ENCODE measurements at regions of chr9 and their contacts with region 1.

Region 1: DNA sequence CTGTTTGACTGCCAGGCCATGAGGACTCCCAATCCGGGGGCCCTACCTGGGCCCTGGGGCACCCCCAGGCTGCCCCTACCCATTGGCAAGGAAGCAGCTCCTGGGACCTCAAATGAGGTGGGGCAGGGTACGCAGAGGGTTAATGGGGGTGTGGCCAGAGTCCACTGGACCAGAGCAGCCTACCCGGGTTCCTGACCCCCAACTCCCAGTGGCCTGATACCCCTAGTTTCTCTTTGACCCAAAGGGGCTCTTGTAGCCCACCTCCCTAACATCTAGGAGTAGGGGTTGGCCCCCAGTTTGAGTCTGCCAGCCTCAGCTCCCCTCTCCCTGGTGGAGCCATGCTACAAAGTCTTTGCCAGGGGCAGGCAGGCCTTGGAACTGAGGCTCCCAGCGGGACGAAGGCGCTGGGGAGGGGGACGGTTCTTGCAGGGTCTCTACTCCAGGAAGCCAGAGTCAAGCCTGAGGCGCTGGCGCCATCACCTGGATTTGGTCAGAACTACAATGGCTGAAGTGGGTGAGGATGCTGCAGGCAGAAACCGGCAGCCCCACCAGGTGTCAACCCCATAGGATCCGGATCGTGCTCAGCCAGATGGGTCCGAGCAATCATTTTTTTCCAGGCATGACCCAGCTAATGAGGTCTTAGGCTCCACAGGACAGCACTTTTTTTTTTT is 8.4 kb upstream of the CERCAM start:
- DNase-seq: peak; percentile 40 to 57
- H3K4me3 ChIP-seq: no peak overlapping the region
- H3K27ac ChIP-seq: no peak overlapping the region
- H3K4me1 ChIP-seq: peaks cover 13% of the 10 kb centered on the region in 2 donors
- H3K27me3 ChIP-seq: no peaks in the 10 kb centered on the region
- CTCF ChIP-seq: peak; percentile 38 to 63 (median 46)
- POLR2A ChIP-seq: no peak

Region 2: DNA sequence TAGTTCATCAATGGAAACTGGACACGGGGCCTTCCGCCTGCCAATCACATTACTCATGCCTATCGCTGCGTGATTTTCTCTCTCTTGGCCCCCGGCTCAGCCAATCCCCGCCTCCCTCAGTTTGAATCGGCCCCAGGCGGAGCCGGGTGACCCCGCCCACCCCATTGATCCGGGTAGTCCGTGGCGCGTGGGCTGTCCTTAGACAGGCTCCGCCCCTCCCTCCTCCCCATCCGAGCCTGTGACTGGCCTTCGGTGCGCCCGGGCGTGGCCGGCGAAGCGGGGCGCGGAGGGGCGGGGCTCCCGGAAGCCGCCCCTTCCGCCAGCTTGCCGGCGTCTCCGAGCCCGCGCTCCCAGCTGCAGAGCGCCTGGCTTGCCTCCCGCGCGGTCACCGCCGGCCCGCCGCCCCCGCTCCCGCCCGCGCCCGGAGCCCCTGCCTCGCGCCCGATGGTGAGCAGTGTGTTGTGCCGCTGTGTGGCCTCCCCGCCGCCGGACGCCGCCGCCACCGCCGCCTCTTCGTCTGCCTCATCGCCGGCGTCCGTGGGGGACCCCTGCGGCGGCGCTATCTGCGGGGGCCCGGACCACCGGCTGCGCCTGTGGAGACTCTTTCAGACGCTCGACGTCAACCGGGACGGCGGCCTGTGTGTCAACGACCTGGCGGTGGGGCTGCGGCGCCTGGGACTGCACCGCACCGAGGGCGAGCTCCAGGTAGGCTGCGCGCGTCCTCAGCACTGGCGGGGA is 344.2 kb before region 1 on chr9 and contains the start of gene SLC25A25:
- intact Hi-C with region 1: no loop called
- DNase-seq: peak; percentile 100
- H3K4me3 ChIP-seq: peak within 1 kb of the TSS; percentile 87 to 99 (median 97)
- H3K27ac ChIP-seq: peak within 1 kb of the TSS; percentile 97 to 100 (median 100)
- H3K4me1 ChIP-seq: peaks cover 50 to 63% of the 10 kb centered on the region in 2 donors
- H3K27me3 ChIP-seq: no peaks in the 10 kb centered on the region
- CTCF ChIP-seq: no peak
- POLR2A ChIP-seq: peak; percentile 91 to 98
- total RNA-seq, gene SLC25A25: 21.9 to 42.0 (median 30.8) TPM

Region 3: DNA sequence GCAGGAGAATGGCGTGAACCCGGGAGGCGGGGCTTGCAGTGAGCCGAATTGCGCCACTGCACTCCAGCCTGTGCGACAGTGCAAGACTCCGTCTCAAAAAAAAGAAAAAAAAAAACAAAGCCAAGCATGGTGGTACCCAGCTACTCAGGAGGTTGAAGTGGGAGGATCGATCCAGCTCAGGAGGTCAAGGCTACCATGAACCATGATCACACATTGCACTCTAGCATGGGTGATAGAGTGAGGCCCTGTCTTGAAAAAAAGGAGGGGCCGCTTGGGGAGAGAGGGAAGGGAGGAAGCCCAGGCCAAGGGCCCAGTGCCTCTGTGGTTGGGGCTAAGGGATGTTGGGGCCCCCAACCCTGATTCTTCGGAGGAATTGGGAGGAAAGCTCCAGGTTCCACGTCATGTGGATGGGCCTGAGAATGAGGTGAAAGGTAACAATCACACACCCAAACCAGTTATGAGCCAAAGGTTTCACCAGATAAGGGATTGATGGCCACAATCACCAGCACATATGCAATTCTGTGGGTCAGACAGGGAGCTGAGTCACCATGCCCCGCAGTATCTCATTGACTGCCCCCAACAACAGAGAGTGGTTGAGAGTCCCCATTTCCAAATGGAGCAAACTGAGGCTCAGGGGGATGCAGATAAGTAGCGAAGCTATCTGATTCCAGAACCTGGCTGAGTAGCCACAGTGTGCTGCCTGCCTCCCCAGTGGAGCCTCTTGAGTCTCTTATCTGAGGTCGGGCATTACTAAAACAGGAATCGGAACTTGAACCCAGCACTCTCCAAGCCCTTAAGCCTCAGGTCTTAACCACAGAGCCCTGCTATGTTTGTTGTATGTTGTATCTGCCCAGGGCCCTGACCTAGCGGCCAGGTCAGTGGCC is 115.7 kb before region 1 on chr9:
- intact Hi-C with region 1: loop called (anchors 10 kb)
- DNase-seq: no peak
- H3K4me3 ChIP-seq: no peak overlapping the region
- H3K27ac ChIP-seq: no peak overlapping the region
- H3K4me1 ChIP-seq: peaks cover 0 to 4% of the 10 kb centered on the region in 2 donors
- H3K27me3 ChIP-seq: no peaks in the 10 kb centered on the region
- CTCF ChIP-seq: no peak
- POLR2A ChIP-seq: no peak

Region 4: GRCh38 chr9:128361986-128362646 is 50.1 kb before region 1 on chr9:
- intact Hi-C with region 1: loop called (anchors 5 kb)
- DNase-seq: peak; percentile 87 to 88
- H3K4me3 ChIP-seq: peak overlapping the region in 1 of 3 donors; percentile 25
- H3K27ac ChIP-seq: peak overlapping the region in 2 of 3 donors; percentile 34 to 74
- H3K4me1 ChIP-seq: peaks cover 6 to 20% of the 10 kb centered on the region in 2 donors
- H3K27me3 ChIP-seq: no peaks in the 10 kb centered on the region
- CTCF ChIP-seq: peak; percentile 61 to 96 (median 92)
- POLR2A ChIP-seq: peak in 1 of 2 donors; percentile 22

Region 5: GRCh38 chr9:129182625-129183495 is 770.6 kb after region 1 on chr9:
- intact Hi-C with region 1: no loop called
- DNase-seq: no peak
- H3K4me3 ChIP-seq: no peak overlapping the region
- H3K27ac ChIP-seq: no peak overlapping the region
- H3K4me1 ChIP-seq: peaks cover 4 to 6% of the 10 kb centered on the region in 2 donors
- H3K27me3 ChIP-seq: no peaks in the 10 kb centered on the region
- CTCF ChIP-seq: peak in 2 of 6 experiments; percentile 9 to 22
- POLR2A ChIP-seq: no peak